ENCODE measurements at regions of chr10 and their contacts with region 1.

Region 1: GRCh38 chr10:131786756-131787605 is 113.8 kb upstream of the PPP2R2D start:
- DNase-seq: no peak
- H3K4me3 ChIP-seq: no peak overlapping the region
- H3K27ac ChIP-seq: no peak overlapping the region
- H3K4me1 ChIP-seq: no peaks in the 10 kb centered on the region
- H3K27me3 ChIP-seq: peaks cover 0 to 25% (median 0%) of the 10 kb centered on the region in 4 donors
- CTCF ChIP-seq: peak; percentile 51 to 76 (median 74)
- EP300 ChIP-seq: no peak
- POLR2A ChIP-seq: no peak

Region 2: DNA sequence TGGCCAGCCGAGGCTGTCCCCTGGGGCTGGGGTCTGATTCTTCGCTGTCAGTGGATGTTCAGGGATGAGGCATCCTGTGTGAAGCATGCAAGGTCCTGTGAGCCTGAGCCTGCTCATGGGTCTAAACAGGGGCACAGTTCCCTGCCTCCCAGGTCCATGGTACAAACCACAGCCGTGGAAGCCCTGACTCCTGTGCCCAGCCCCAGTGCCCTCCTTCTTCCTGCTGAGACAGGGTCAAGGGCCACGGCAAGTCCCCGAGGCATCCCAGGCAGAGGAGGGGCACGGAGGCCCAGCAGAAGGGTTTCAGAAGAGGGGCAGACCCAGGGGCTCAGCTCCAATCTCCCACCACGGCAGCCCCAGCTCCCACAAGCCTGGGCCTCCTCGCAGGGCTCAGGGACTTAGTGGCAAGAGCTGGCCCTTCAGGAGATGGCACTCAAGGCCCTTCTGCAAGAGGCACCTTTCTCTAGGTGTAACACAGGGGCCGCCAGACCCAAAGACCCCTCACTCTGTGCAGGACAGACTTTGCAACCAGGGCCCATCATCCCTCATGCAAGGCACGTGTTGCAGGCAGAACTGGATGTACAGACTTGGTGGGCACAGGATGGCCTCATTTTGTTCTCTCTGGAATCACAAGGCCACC is 724.2 kb before region 1 on chr10:
- intact Hi-C with region 1: no loop called
- DNase-seq: no peak
- H3K4me3 ChIP-seq: no peak overlapping the region
- H3K27ac ChIP-seq: no peak overlapping the region
- H3K4me1 ChIP-seq: no peaks in the 10 kb centered on the region
- H3K27me3 ChIP-seq: peaks cover 0 to 35% (median 0%) of the 10 kb centered on the region in 4 donors
- CTCF ChIP-seq: no peak
- EP300 ChIP-seq: no peak
- POLR2A ChIP-seq: no peak

Region 3: DNA sequence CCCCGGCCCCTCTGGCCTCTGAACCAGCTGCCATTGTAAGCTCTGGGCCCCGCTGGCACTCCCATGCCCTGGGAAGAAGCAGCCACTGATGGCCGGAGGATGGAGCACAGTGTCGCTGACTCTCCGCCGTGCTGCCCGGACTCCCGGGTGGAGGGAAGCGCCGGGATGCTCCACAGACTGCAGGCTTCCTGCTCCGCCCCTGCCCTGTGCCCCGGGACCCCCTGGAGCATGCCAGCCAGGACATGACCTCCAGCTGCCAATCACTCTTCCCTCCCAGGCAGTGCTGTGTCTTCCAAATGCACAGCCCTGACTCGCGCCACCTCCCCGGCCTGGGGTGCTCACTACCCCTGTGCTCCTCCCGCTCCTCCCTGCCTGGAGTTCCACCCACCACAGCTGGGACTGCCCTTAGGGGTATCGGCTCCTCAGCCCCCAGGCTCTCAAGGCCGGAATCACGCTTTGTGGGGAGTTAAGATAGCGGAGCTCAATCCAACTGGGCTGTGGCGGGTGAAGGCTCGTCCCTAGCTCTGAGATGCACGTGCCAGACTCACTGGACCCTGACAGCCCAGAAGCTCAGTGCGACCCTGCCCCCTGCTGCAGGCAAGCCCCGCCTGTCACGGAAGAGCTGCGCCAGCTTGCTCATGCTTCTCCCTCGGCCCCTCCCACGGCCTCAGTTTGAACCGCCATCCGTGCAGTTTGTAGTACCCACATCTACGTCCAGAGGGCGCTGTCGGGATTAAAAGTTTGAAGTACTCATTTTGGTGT is 333.2 kb before region 1 on chr10:
- intact Hi-C with region 1: loop called (anchors 5 kb)
- DNase-seq: no peak
- H3K4me3 ChIP-seq: peak overlapping the region; percentile 28 to 46 (median 32)
- H3K27ac ChIP-seq: no peak overlapping the region
- H3K4me1 ChIP-seq: peaks cover 0 to 10% (median 8%) of the 10 kb centered on the region in 4 donors
- H3K27me3 ChIP-seq: peaks cover 0 to 66% (median 16%) of the 10 kb centered on the region in 4 donors
- CTCF ChIP-seq: peak; percentile 65 to 93 (median 71)
- EP300 ChIP-seq: no peak
- POLR2A ChIP-seq: no peak

Region 4: GRCh38 chr10:131695496-131696165 is 91.3 kb before region 1 on chr10:
- intact Hi-C with region 1: no loop called
- DNase-seq: no peak
- H3K4me3 ChIP-seq: no peak overlapping the region
- H3K27ac ChIP-seq: no peak overlapping the region
- H3K4me1 ChIP-seq: no peaks in the 10 kb centered on the region
- H3K27me3 ChIP-seq: peaks cover 0 to 61% (median 0%) of the 10 kb centered on the region in 4 donors
- CTCF ChIP-seq: no peak
- EP300 ChIP-seq: no peak
- POLR2A ChIP-seq: no peak

Region 5: DNA sequence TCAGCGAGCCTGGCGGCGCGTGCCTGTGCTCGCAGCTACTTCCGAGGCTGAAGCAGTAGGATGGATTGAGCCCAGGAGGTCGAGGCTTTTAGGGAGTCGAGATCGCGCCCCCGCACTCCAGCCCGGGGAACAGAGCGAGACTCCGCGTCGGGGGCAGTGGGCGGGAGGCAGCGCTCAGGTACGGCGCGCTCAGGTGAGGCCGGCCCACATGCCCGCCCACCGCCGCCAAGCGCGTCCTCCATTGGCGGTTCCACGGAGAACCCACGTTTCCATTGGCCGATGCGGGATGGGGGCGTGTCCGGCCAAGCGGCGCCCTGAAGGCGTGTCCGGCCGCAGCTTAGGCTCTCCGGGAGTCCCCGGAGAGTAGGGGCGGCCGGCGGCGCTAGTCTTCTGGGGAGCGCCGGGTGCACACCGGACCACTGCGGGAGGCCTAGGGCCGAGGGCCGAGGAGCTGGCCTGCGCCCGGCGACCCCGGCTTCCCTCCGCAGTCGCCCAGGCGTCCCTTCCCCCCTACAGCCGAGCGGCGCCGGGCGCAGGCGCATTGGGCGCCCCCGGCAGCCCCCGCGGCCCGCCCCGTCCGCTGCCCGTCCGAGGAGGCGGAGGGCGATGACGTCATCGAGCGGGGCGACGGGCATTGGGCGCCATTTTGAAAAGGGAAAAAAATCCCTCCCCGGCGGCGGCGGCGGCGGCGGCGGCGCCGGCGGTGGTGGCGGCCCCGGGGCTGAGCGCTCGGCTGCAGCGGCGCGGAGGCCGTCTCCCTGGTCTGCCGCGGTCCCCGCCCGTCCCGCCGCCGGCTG is 113.6 kb after region 1 on chr10 and contains the start of gene PPP2R2D:
- intact Hi-C with region 1: no loop called
- DNase-seq: peak; percentile 97
- H3K4me3 ChIP-seq: peak within 1 kb of the TSS; percentile 76 to 96 (median 88)
- H3K27ac ChIP-seq: peak within 1 kb of the TSS; percentile 92 to 98 (median 96)
- H3K4me1 ChIP-seq: peaks cover 40 to 49% (median 47%) of the 10 kb centered on the region in 4 donors
- H3K27me3 ChIP-seq: peaks cover 0 to 27% (median 6%) of the 10 kb centered on the region in 4 donors
- CTCF ChIP-seq: no peak
- EP300 ChIP-seq: no peak
- POLR2A ChIP-seq: no peak
- total RNA-seq, gene PPP2R2D: 38.2 to 49.7 (median 41.0) TPM

Measured in esophagus muscularis mucosa (tissue), 4 donors.